Common myeloid progenitor, CD34-positive (primary cell): ENCODE measurements at regions of chr1 and their contacts with region 1.

Region 1: DNA sequence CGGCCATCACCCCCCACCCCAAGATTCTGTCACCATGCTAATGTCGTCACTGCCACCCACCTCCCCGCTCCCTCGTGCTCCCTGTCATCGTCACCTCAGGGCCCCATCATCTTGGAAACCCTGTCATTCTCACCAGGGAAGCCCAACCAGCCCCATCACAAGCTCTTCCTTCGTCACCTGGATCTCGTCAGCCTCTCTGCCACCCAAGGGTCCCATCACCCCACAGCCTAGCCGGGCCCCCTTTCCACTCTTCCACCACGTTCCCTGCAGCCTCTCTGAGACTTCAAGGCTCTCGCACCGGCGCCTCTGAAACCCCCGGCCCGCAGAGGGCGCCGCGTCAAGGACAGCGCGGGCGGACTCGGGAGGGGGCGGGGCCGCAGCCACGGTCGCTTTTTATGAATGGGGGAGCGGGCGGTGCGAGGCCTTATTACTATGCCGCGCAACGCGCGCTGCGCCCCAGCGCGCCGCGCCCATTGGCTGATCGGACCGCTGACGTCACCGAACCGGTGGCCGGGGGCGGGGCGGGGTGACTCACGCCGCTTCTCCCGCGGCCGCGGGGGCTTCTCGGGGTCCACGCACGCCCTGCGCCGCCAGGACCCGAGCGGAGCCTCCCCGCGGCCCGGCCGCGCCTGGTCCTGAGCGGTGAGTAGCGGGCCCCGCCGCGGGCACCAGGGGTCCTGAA is at the start of gene GPR3:
- DNase-seq: peak; percentile 93 to 96 (median 95)
- H3K4me3 ChIP-seq: peak within 1 kb of the TSS; percentile 19 to 78 (median 72)
- H3K27ac ChIP-seq: no peak within 1 kb of the TSS
- H3K4me1 ChIP-seq: peaks cover 2 to 24% (median 18%) of the 10 kb centered on the region in 4 experiments
- H3K27me3 ChIP-seq: no peaks in the 10 kb centered on the region

Region 2: DNA sequence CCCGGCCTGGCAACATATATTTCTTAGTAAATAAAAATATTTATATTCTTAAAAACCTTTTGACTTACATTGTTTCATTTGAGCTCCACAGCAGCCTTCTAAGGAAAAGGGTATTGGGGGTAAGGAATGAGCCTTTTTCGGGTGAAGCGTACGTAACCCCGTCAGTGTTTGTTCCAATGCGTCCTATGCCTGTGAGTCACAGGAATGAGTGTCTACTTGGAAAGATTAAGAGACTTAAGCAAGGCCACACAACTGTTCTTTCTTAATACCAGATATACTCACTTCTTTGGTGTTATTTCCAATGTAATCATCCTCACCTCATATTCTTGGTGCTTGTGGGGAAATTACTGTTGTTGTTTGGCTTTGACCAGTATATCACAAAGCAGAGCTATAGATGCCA is 135.1 kb before region 1 on chr1:
- CTCF ChIA-PET with region 1: no interaction called
- POLR2A ChIA-PET with region 1: no interaction called
- DNase-seq: no peak
- H3K4me3 ChIP-seq: no peak overlapping the region
- H3K27ac ChIP-seq: no peak overlapping the region
- H3K4me1 ChIP-seq: peaks cover 0 to 7% (median 2%) of the 10 kb centered on the region in 4 experiments
- H3K27me3 ChIP-seq: no peaks in the 10 kb centered on the region

Region 3: DNA sequence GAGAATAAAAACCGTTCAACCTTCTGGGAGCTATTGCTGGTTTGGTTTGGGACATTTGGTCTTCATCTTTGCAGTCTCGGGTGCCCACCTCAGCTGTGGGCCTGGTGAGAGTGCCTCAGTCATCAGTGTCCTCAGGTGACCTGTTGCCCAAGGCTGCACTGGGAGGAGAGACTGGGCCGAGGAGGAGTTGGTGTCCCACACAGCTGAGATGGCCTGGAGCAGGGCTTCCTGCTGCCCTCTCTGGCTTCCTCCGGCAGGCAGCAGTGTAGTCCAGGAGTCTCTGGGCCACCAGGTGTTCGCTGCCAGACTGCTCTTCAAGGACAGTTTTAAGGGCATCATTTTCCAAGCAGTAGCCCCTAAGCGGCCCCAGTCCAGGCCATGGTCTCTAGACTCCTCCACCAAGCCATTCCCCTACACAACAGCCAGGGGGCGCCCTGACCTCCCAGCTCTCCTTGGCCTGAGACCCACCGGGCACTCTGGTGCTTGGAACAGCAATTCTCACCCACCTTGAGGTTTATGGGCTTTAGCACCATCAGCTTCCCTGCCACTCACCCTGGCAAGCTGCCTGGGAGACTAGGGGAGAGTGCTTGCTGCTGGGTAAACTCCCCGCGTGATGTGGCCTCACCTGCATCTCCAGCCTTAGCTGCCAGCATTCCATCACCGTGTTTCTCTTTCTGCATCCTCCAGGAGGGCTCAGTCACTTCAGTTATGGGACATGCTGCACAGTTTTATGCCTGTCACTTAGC is 59.5 kb before region 1 on chr1:
- CTCF ChIA-PET with region 1: interaction called, 53 read pairs
- POLR2A ChIA-PET with region 1: interaction called, 3 read pairs
- DNase-seq: peak in 2 of 3 donors; percentile 64
- H3K4me3 ChIP-seq: no peak overlapping the region
- H3K27ac ChIP-seq: no peak overlapping the region
- H3K4me1 ChIP-seq: no peaks in the 10 kb centered on the region
- H3K27me3 ChIP-seq: no peaks in the 10 kb centered on the region

Region 4: DNA sequence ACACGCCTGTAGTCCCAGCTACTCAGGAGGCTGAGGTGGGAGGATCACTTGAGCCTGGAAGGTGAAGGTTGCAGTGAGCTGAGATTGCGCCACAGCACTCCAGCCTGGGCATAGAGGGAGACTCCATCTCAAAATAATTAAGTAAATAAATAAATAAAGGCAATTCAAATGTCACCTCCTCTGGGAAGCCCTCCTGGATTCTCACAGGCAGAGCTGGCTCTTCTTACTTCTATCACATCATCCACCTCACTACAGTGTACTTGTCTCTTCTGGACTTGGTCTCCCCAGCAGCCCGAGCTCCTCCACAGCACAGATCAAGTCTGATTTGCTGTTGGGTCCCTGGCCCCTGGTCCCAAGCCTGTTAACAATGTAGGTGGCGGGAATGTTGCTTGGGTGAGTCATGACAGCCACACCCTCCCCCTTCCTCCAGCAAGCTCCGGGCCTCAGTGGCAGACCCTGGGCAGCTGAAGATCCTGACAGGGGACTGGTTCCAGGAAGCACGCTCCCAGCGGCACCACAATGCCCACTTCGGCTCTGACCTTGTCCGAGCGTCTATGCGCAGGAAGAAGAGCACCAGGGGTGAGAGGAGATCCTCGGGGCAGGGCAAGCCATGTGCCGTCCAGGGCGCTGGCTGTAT is 45.1 kb before region 1 on chr1:
- CTCF ChIA-PET with region 1: interaction called, 11 read pairs
- POLR2A ChIA-PET with region 1: interaction called, 3 read pairs
- DNase-seq: no peak
- H3K4me3 ChIP-seq: no peak overlapping the region
- H3K27ac ChIP-seq: no peak overlapping the region
- H3K4me1 ChIP-seq: peaks cover 0 to 34% (median 27%) of the 10 kb centered on the region in 4 experiments
- H3K27me3 ChIP-seq: no peaks in the 10 kb centered on the region

Region 5: DNA sequence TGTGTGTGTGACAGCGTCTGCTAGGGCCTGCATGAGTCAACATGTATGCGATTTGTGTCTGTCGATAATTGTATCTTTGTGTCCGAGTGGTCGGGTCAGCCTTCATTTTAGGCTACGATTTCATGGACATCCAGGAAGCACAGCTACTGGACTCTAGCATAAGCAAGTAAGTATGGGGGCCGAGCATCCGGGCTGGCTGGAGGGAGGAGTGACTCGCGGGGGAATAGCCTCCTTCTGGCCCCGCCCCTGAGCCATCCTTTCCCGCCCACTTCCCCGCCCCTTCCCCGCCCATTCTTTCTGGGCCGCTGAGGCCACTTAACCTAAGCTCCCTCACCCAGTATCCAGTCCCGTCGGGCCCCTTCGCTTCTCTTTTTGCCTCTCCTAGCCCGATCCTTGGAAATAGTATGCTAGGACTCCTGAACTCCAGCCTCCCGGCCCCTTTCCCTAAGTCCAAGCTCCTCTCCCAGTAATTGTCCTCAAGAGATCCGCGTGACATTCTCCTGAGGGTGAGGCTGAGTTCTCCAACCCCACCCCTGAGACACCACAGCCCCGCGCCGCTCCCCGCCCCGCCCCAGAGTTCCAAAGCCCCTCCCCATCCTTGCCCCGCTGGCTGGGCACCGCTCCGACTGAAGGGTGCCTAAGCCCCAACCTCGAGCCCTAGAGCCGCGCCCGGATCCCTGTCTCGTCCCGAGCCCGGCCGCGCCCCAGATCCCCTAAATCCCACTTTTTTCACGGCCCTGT is 26.7 kb before region 1 on chr1:
- CTCF ChIA-PET with region 1: interaction called, 15 read pairs
- POLR2A ChIA-PET with region 1: no interaction called
- DNase-seq: peak; percentile 69 to 79 (median 77)
- H3K4me3 ChIP-seq: peak overlapping the region; percentile 37 to 83 (median 70)
- H3K27ac ChIP-seq: peak overlapping the region in 1 of 2 experiments; percentile 54
- H3K4me1 ChIP-seq: peaks cover 9 to 59% (median 52%) of the 10 kb centered on the region in 4 experiments
- H3K27me3 ChIP-seq: no peaks in the 10 kb centered on the region

Region 6: GRCh38 chr1:27436204-27437159 is 44.2 kb after region 1 on chr1:
- CTCF ChIA-PET with region 1: no interaction called
- POLR2A ChIA-PET with region 1: no interaction called
- DNase-seq: peak in 2 of 3 donors; percentile 55 to 72
- H3K4me3 ChIP-seq: peak overlapping the region in 2 of 7 experiments; percentile 10 to 26
- H3K27ac ChIP-seq: peak overlapping the region in 1 of 2 experiments; percentile 56
- H3K4me1 ChIP-seq: peaks cover 49 to 80% (median 69%) of the 10 kb centered on the region in 4 experiments
- H3K27me3 ChIP-seq: no peaks in the 10 kb centered on the region